AG04450 (cell line): ENCODE measurements at regions of chr1 and their contacts with region 1.

Region 1: GRCh38 chr1:201170533-201171062 is 16.3 kb upstream of the TMEM9 start:
- DNase-seq: peak; percentile 50
- H3K4me3 ChIP-seq: peak overlapping the region; percentile 70
- H3K27ac ChIP-seq: peak overlapping the region; percentile 31
- H3K27me3 ChIP-seq: peaks cover 14% of the 10 kb centered on the region
- CTCF ChIP-seq: no peak

Region 2: GRCh38 chr1:200866521-200866920 is 304.1 kb before region 1 on chr1:
- CTCF ChIA-PET with region 1: no interaction called
- POLR2A ChIA-PET with region 1: no interaction called
- DNase-seq: no peak
- H3K4me3 ChIP-seq: no peak overlapping the region
- H3K27ac ChIP-seq: no peak overlapping the region
- H3K27me3 ChIP-seq: peaks cover 8% of the 10 kb centered on the region
- CTCF ChIP-seq: no peak

Region 3: GRCh38 chr1:201184307-201185122 is 13.9 kb after region 1 on chr1:
- CTCF ChIA-PET with region 1: interaction called, 12 read pairs
- POLR2A ChIA-PET with region 1: no interaction called
- DNase-seq: peak; percentile 60
- H3K4me3 ChIP-seq: no peak overlapping the region
- H3K27ac ChIP-seq: no peak overlapping the region
- H3K27me3 ChIP-seq: peaks cover 17% of the 10 kb centered on the region
- CTCF ChIP-seq: peak; percentile 79